ENCODE measurements at regions of chr19 and their contacts with region 1.

Region 1: DNA sequence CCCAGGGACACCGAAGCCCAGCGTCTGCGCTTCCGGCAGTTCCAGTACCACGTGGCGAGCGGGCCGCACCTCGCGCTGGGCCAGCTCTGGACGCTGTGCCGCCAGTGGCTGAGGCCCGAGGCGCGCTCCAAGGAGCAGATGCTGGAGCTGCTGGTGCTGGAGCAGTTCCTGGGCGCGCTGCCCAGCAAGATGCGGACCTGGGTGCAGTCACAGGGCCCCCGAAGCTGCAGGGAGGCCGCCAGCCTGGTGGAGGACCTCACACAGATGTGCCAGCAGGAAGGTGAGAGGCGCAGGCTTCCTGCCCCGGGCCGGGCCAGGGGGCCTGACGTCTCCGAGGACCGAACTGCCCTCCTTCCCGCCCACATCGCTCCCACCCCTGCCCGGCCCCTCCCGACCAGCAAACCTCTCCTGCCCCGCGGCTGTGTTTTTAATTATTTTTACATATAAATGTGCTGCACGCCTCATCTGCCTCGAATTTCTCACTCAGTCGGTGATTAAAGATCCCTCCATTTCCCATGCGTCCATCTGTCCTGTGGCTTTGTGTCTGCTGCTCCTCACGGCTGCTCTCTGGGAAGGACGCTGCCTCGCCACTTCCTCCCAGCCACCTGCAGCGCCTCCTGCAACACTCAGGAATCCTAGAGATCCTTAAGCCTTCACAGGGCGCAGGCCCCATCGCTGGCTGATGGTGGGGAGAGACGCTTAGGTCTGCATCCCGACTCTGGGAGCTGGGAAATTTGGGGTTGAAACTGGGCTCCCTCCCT is 4.3 kb downstream of the ZSCAN1 start:
- DNase-seq: peak; percentile 56
- ATAC-seq: peak; percentile 20
- H3K4me3 Mint-ChIP-seq: peak overlapping the region; percentile 57
- H3K27ac Mint-ChIP-seq: peak overlapping the region; percentile 95
- H3K4me1 Mint-ChIP-seq: peaks cover 32% of the 10 kb centered on the region
- H3K27me3 Mint-ChIP-seq: peaks cover 52% of the 10 kb centered on the region
- CTCF ChIP-seq: no peak

Region 2: GRCh38 chr19:57992841-57993240 is 45.3 kb before region 1 on chr19:
- CTCF ChIA-PET with region 1: no interaction called
- POLR2A ChIA-PET with region 1: no interaction called
- DNase-seq: no peak
- ATAC-seq: no peak
- H3K4me3 Mint-ChIP-seq: no peak overlapping the region
- H3K27ac Mint-ChIP-seq: no peak overlapping the region
- H3K4me1 Mint-ChIP-seq: no peaks in the 10 kb centered on the region
- H3K27me3 Mint-ChIP-seq: no peaks in the 10 kb centered on the region
- CTCF ChIP-seq: no peak

Region 3: DNA sequence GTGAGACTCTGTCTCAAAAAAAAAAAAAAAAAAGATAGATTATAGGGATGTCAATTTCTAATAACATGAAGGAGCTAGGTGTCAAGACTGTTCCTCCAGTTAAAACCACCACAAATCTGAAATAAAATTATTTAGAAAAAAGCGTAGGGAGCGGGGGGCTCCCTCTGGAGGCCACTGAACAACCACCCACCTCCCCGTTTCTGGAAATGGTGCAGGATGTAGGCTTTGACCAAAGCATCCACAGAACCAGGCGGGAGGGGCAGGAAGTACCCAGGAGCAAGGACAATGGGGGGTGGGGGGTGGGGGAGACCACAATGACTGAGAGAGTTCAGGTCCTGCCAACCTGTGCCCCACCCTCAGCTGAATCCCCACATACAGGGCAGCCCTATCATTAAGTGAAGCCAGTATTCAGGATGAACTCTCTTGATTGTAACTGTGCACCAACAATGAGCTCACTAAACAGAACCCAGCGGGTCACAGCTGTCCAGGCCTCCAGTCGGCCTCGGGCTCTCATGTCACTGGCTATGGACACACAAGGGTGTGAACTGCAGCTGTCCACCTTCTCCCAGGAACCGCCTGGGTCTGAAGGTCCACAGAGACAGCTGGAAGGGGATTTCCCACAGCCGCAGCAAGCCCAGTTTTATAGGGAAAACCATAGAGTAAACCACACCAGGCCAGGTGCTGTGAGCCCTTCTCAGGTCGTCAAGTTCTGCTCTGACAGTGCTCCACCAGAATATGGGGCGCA is 53.3 kb after region 1 on chr19:
- CTCF ChIA-PET with region 1: interaction called, 15 read pairs
- POLR2A ChIA-PET with region 1: interaction called, 3 read pairs
- DNase-seq: no peak
- ATAC-seq: peak; percentile 77
- H3K4me3 Mint-ChIP-seq: no peak overlapping the region
- H3K27ac Mint-ChIP-seq: peak overlapping the region; percentile 88
- H3K4me1 Mint-ChIP-seq: peaks cover 6% of the 10 kb centered on the region
- H3K27me3 Mint-ChIP-seq: no peaks in the 10 kb centered on the region
- CTCF ChIP-seq: no peak

Region 4: DNA sequence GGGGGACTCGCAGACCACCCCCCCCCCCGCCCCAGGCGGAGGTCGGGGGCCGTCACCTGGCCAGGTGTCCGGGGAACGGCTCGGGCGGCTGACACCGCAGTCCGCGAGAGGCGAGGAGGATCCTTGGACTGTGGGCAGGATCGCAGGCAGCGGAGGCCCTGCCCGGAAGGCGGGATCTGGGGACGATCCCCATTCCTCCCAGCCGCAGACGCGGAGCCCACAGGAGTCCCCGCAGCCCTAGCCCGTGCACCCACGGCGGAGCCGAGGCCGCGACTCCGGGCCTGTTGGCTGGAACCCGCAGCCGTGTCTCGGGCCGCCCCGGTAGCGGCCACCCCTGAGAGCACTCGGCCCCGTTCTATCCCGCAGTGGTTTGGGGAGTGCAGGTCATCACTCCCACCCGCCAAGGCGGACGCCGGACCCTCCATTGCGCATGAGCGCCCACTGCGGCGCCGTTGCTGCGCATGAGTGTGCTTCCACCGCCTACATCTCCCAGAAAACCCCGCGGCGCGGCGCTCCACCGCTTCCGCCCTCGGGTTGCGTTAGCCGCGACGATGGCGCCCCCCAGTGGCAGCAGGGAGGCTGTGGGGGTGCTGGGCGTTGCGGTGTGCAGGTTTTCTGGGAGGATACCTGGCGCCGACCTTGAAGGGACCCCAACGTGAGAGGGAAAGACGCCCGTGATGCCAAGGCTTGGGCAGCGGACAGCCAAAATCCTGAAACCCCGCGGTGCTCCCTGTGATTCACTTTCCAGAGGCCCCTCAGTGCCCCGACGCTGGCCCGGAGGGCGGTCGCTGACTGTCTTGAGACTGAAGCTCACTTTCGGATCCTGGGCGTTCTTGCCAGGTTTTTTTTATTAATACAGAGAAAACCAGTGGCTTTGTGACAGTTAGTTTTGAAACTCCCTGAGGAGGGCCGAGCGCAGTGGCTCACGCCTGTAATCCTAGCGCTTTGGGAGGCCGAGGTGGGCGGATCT is 116.9 kb after region 1 on chr19:
- CTCF ChIA-PET with region 1: interaction called, 13 read pairs
- POLR2A ChIA-PET with region 1: interaction called, 3 read pairs
- DNase-seq: peak; percentile 99
- ATAC-seq: peak; percentile 85
- H3K4me3 Mint-ChIP-seq: peak overlapping the region; percentile 93
- H3K27ac Mint-ChIP-seq: no peak overlapping the region
- H3K4me1 Mint-ChIP-seq: peaks cover 9% of the 10 kb centered on the region
- H3K27me3 Mint-ChIP-seq: peaks cover 25% of the 10 kb centered on the region
- CTCF ChIP-seq: peak; percentile 99

Measured in WTC11 (cell line).